Common myeloid progenitor, CD34-positive (primary cell): ENCODE measurements at regions of chr18 and their contacts with region 1.

Region 1: GRCh38 chr18:42072407-42072806 is 117.4 kb downstream of the PIK3C3 start:
- DNase-seq: no peak
- H3K4me3 ChIP-seq: no peak overlapping the region
- H3K27ac ChIP-seq: no peak overlapping the region
- H3K4me1 ChIP-seq: no peaks in the 10 kb centered on the region
- H3K27me3 ChIP-seq: no peaks in the 10 kb centered on the region

Region 2: GRCh38 chr18:41999751-42000150 is 72.7 kb before region 1 on chr18:
- CTCF ChIA-PET with region 1: no interaction called
- POLR2A ChIA-PET with region 1: no interaction called
- DNase-seq: peak; percentile 50 to 82 (median 78)
- H3K4me3 ChIP-seq: no peak overlapping the region
- H3K27ac ChIP-seq: peak overlapping the region in 1 of 2 experiments; percentile 54
- H3K4me1 ChIP-seq: peaks cover 3 to 17% (median 6%) of the 10 kb centered on the region in 4 experiments
- H3K27me3 ChIP-seq: no peaks in the 10 kb centered on the region

Region 3: GRCh38 chr18:42053188-42053781 is 19.1 kb before region 1 on chr18:
- CTCF ChIA-PET with region 1: interaction called, 10 read pairs
- POLR2A ChIA-PET with region 1: no interaction called
- DNase-seq: peak; percentile 62 to 77 (median 76)
- H3K4me3 ChIP-seq: no peak overlapping the region
- H3K27ac ChIP-seq: no peak overlapping the region
- H3K4me1 ChIP-seq: peaks cover 0 to 3% (median 0%) of the 10 kb centered on the region in 4 experiments
- H3K27me3 ChIP-seq: no peaks in the 10 kb centered on the region

Region 4: DNA sequence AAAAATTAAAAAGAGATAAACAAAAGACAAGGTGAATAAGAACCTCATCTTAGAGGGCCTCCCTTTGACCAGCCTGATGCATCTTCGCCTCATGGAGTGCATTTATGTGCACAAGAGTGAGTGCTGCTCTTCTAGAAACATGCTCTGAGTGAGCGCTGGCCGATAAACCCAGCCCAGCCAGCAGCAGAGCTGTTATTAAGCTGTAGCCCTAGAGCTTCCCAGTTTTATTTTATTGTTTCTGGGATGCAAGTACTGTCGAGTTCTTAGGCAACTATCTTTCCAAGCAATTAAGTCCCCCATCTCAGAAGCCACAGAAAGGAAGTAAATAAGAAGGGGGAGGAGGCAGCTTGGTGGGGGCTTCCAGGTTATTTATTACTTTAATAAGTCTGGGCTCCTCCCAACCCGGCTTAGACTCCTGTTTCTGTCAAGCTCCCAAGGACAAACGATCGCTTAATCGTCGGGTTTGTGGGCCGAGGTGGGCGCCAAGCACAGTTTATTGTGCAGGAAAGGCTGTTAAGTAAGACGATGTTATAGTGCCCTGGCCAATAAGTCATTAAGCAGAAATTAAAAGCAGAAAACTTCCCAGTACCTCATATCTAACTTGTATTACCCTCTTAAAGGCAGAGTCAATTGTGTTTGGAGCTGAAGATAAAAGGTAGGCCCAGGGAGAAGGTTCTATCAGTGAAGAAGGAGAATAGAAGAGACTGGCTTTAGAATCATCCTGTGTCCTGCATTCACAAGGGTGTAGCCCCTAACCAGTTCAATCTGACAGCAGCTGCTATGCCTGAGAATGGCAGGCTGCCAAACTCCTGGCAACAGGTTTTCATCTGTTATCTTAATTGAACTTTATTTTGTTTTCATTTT is 58.9 kb after region 1 on chr18:
- CTCF ChIA-PET with region 1: no interaction called
- POLR2A ChIA-PET with region 1: no interaction called
- DNase-seq: no peak
- H3K4me3 ChIP-seq: no peak overlapping the region
- H3K27ac ChIP-seq: no peak overlapping the region
- H3K4me1 ChIP-seq: no peaks in the 10 kb centered on the region
- H3K27me3 ChIP-seq: no peaks in the 10 kb centered on the region

Region 5: GRCh38 chr18:42229211-42230210 is 157.1 kb after region 1 on chr18:
- CTCF ChIA-PET with region 1: no interaction called
- POLR2A ChIA-PET with region 1: no interaction called
- DNase-seq: no peak
- H3K4me3 ChIP-seq: no peak overlapping the region
- H3K27ac ChIP-seq: no peak overlapping the region
- H3K4me1 ChIP-seq: no peaks in the 10 kb centered on the region
- H3K27me3 ChIP-seq: no peaks in the 10 kb centered on the region

Region 6: DNA sequence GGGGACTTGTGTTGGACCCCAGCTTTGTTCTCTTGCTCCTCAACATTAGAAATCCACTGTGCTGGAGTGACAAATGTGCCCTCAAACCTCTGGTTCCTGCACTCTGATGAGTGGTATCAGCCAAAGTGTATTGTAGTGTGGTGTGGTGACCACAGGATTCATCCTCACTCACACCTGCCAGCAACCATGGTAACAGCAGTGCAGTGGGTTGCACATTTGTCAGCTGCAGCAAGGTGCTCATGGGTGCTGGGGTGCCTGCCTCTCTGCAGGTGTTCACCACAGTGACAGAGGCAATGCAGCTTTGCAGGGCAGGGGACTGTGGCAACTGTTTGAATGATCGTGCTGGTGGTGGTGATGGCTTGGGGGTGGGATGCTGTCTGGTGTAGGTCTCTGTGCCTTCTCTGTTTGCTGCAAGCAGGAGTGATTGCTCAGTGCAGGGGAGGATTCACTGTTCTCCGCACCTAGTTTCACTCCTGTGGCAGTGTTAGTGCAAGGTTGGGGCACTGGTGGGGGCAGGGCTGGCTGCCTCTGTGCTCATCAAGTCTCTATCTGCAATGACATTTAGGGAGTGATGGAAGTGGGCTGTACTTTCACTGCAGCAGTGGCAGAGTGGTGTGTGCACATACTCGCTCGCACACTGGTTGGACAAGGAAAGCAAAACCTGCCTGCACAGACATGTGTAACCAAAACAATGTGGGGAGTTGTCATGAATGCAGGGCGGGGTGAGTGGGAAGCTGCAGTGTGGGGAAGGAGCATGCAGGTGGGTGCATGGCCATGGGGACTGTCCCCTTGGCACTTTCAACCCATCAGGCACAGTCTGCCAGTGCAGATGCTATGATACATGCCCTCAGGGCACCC is 183.7 kb after region 1 on chr18:
- CTCF ChIA-PET with region 1: no interaction called
- POLR2A ChIA-PET with region 1: no interaction called
- DNase-seq: no peak
- H3K4me3 ChIP-seq: no peak overlapping the region
- H3K27ac ChIP-seq: no peak overlapping the region
- H3K4me1 ChIP-seq: no peaks in the 10 kb centered on the region
- H3K27me3 ChIP-seq: no peaks in the 10 kb centered on the region